Activated CD4-positive, alpha-beta memory T cell treated with anti-CD3 and anti-CD28 coated beads for 36 hours (primary cell): ENCODE measurements at regions of chr7 and their contacts with region 1.

Region 1: GRCh38 chr7:31443457-31443856 is 70.4 kb upstream of the ITPRID1 start:
- DNase-seq: no peak
- H3K4me3 Mint-ChIP-seq: no peak overlapping the region
- H3K27ac Mint-ChIP-seq: no peak overlapping the region
- H3K4me1 Mint-ChIP-seq: no peaks in the 10 kb centered on the region
- H3K27me3 Mint-ChIP-seq: no peaks in the 10 kb centered on the region

Region 2: DNA sequence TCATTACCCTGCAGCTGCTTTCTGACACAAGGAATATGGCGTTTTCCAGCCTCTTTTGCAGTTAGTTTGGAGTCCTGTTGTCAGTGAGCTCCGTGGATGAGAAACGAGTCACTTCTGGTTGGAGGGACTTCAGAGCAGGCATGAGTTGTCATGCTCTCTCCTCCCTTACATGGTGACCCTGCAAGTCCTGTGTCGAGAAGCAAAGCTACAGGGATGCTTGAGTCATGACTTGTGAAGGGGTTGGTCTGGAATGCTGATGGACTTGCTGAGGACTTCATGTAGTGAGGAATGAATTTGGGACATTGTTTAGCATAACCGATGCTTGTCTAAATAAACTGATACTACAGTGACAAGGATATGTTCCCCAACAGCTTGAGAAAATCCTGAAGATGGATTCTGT is 282.5 kb before region 1 on chr7:
- CTCF ChIA-PET with region 1: no interaction called
- POLR2A ChIA-PET with region 1: no interaction called
- intact Hi-C with region 1: no loop called
- DNase-seq: no peak
- H3K4me3 Mint-ChIP-seq: no peak overlapping the region
- H3K27ac Mint-ChIP-seq: no peak overlapping the region
- H3K4me1 Mint-ChIP-seq: no peaks in the 10 kb centered on the region
- H3K27me3 Mint-ChIP-seq: no peaks in the 10 kb centered on the region

Region 3: DNA sequence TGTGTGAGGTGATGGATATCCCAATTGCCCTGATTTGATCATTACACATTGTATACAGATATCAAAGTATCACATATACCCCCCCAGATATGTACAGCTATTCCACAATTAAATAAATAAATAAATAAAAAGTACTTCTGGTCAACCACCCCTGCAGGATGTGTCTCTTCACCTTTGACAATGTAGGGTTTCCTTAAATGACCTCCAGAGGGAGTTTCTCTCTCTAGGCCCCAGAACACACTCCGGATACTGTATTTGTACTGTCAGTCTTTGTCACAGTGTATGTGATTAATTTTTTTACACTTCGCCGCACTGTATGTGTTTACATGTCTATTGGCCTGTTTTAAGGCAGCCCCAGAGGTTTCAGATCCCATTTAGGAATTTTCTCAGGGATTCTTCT is 267.8 kb before region 1 on chr7:
- CTCF ChIA-PET with region 1: no interaction called
- POLR2A ChIA-PET with region 1: no interaction called
- intact Hi-C with region 1: no loop called
- DNase-seq: no peak
- H3K4me3 Mint-ChIP-seq: no peak overlapping the region
- H3K27ac Mint-ChIP-seq: no peak overlapping the region
- H3K4me1 Mint-ChIP-seq: no peaks in the 10 kb centered on the region
- H3K27me3 Mint-ChIP-seq: no peaks in the 10 kb centered on the region

Region 4: GRCh38 chr7:31456646-31457368 is 13.3 kb after region 1 on chr7:
- CTCF ChIA-PET with region 1: interaction called, 13 read pairs
- POLR2A ChIA-PET with region 1: no interaction called
- intact Hi-C with region 1: no loop called
- DNase-seq: no peak
- H3K4me3 Mint-ChIP-seq: no peak overlapping the region
- H3K27ac Mint-ChIP-seq: no peak overlapping the region
- H3K4me1 Mint-ChIP-seq: no peaks in the 10 kb centered on the region
- H3K27me3 Mint-ChIP-seq: no peaks in the 10 kb centered on the region

Region 5: GRCh38 chr7:31488562-31489203 is 45.2 kb after region 1 on chr7:
- CTCF ChIA-PET with region 1: interaction called, 7 read pairs
- POLR2A ChIA-PET with region 1: no interaction called
- intact Hi-C with region 1: loop called (anchors 5 kb)
- DNase-seq: peak; percentile 48
- H3K4me3 Mint-ChIP-seq: no peak overlapping the region
- H3K27ac Mint-ChIP-seq: no peak overlapping the region
- H3K4me1 Mint-ChIP-seq: no peaks in the 10 kb centered on the region
- H3K27me3 Mint-ChIP-seq: no peaks in the 10 kb centered on the region

Region 6: DNA sequence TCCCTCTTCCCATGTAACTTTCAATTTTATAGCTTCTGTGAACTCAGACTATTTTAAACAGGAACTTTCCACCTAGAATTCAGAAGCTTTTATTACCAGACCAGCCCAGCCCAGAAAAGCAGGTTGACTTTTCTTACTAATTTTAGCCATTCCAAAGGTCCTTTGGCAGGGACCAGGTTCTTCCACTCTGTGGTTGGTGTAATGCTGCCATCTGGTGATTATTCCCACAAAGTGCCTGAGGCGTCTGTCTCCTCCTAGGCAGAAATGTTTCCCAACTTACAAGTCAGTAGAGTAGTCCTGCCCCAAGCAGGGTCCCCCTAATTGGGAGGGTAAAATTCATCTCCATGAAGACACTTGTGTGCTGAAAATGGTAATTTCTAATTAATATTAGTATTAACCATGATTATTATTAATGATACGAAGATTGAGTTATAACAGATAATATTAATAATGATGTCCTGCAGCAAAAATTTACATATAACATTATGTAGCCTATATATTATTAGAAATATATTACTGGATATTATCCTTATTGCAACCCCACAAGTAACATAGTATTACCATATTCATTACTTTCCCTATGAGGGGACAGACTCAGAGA is 190.5 kb after region 1 on chr7:
- CTCF ChIA-PET with region 1: interaction called, 4 read pairs
- POLR2A ChIA-PET with region 1: no interaction called
- intact Hi-C with region 1: loop called (anchors 10 kb)
- DNase-seq: no peak
- H3K4me3 Mint-ChIP-seq: no peak overlapping the region
- H3K27ac Mint-ChIP-seq: no peak overlapping the region
- H3K4me1 Mint-ChIP-seq: no peaks in the 10 kb centered on the region
- H3K27me3 Mint-ChIP-seq: no peaks in the 10 kb centered on the region

Region 7: GRCh38 chr7:31735991-31736982 is 292.8 kb after region 1 on chr7:
- CTCF ChIA-PET with region 1: no interaction called
- POLR2A ChIA-PET with region 1: no interaction called
- intact Hi-C with region 1: loop called (anchors 1 kb)
- DNase-seq: peak; percentile 31
- H3K4me3 Mint-ChIP-seq: no peak overlapping the region
- H3K27ac Mint-ChIP-seq: no peak overlapping the region
- H3K4me1 Mint-ChIP-seq: no peaks in the 10 kb centered on the region
- H3K27me3 Mint-ChIP-seq: no peaks in the 10 kb centered on the region